ENCODE measurements at regions of chr5 and their contacts with region 1.

Region 1: GRCh38 chr5:69093771-69094482 is at the start of gene SLC30A5:
- DNase-seq: peak; percentile 98
- ATAC-seq: peak; percentile 99
- H3K4me3 ChIP-seq: peak within 1 kb of the TSS; percentile 87
- H3K27ac ChIP-seq: peak within 1 kb of the TSS; percentile 57
- H3K4me1 ChIP-seq: no peaks in the 10 kb centered on the region; the same call in 1 of the 2 replicates
- H3K27me3 ChIP-seq: no peaks in the 10 kb centered on the region
- CTCF ChIP-seq: peak; percentile 88 to 98 (median 97)
- EP300 ChIP-seq: peak in 1 of 2 experiments; percentile 51; a peak in 3 of 4 replicates
- POLR2A ChIP-seq: peak; percentile 98
- RAD21 ChIP-seq: peak; percentile 98
- polyA plus RNA-seq, gene SLC30A5: 14.7 to 27.5 TPM

Region 2: GRCh38 chr5:69042915-69043658 is 50.8 kb before region 1 on chr5:
- CTCF ChIA-PET with region 1: interaction called, 6 read pairs
- POLR2A ChIA-PET with region 1: no interaction called
- RAD21 ChIA-PET with region 1: interaction called, 10 read pairs
- SMC1A ChIA-PET with region 1: interaction called, 8 read pairs
- in situ Hi-C with region 1: no loop called
- intact Hi-C with region 1: loop called (anchors 2 kb)
- DNase-seq: peak; percentile 92
- ATAC-seq: peak; percentile 97
- H3K4me3 ChIP-seq: peak overlapping the region; percentile 60; the same call in 1 of the 2 replicates
- H3K27ac ChIP-seq: peak overlapping the region; percentile 68
- H3K4me1 ChIP-seq: no peaks in the 10 kb centered on the region
- H3K27me3 ChIP-seq: no peaks in the 10 kb centered on the region
- CTCF ChIP-seq: peak; percentile 66 to 90 (median 84)
- EP300 ChIP-seq: no peak
- POLR2A ChIP-seq: no peak
- RAD21 ChIP-seq: peak; percentile 87

Region 3: DNA sequence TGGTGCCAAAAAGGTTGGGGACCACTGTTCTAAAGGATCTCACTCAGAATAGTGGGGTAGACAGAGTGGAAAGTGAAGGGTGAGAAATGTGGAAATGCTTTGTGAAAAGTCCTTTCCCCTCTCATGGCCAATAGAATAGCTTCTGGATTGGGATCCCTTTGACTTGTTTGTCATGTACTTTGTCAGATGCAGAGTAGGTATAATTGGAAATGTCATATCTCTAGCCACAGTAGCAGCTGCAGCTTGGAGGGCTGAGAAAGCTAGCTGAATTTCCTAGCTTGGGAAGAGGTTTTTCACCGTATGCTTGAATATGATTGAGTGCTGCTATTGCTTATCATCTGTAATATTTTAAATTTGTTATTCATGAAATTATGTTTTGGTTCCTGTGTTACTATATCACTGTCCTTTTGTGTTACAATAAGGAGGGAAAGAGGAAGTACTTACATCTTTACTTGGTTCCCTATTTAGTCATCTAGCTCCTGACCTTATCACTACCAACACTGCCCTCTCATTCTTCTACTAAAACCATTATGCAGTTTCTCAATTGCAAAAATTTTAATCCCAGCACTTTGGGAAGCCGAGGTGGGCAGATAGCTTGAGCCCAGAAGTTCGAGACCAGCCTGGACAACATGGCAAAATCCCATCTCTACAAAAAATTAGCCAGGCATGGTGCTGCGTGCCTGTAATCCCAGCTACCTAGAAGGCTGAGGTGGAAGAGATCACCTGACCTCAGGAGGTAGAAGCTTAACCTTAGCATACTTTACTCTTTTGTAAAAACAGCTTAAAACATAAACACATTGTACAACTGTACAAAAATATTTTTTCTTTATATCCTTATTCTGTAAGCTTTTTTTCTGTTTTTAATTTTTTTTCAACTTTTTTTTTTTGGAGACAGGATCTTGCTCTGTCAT is 12.3 kb after region 1 on chr5:
- CTCF ChIA-PET with region 1: interaction called, 7 read pairs
- POLR2A ChIA-PET with region 1: no interaction called
- RAD21 ChIA-PET with region 1: interaction called, 11 read pairs
- SMC1A ChIA-PET with region 1: no interaction called
- in situ Hi-C with region 1: no loop called
- intact Hi-C with region 1: no loop called
- DNase-seq: no peak
- ATAC-seq: peak; percentile 97
- H3K4me3 ChIP-seq: no peak overlapping the region
- H3K27ac ChIP-seq: 0 out of 2 replicates have a peak overlapping the region, but pooled peaks have one; percentile 13
- H3K4me1 ChIP-seq: peaks cover 10% of the 10 kb centered on the region; the same call in 1 of the 2 replicates
- H3K27me3 ChIP-seq: no peaks in the 10 kb centered on the region
- CTCF ChIP-seq: no peak
- EP300 ChIP-seq: 0 out of 4 replicates have a peak, but pooled peaks of 1 of the 2 experiments have one; percentile 37
- POLR2A ChIP-seq: no peak
- RAD21 ChIP-seq: no peak

Region 4: GRCh38 chr5:69189162-69190086 is 95.5 kb after region 1 on chr5 and contains the start of gene CENPH:
- CTCF ChIA-PET with region 1: interaction called, 7 read pairs
- POLR2A ChIA-PET with region 1: no interaction called
- RAD21 ChIA-PET with region 1: interaction called, 8 read pairs
- SMC1A ChIA-PET with region 1: interaction called, 4 read pairs
- in situ Hi-C with region 1: no loop called
- intact Hi-C with region 1: loop called (anchors 5 kb)
- DNase-seq: peak; percentile 63
- ATAC-seq: peak; percentile 95
- H3K4me3 ChIP-seq: peak within 1 kb of the TSS; percentile 93
- H3K27ac ChIP-seq: peak within 1 kb of the TSS; percentile 85
- H3K4me1 ChIP-seq: peaks cover 5% of the 10 kb centered on the region; the same call in 1 of the 2 replicates
- H3K27me3 ChIP-seq: no peaks in the 10 kb centered on the region
- CTCF ChIP-seq: no peak
- EP300 ChIP-seq: no peak
- POLR2A ChIP-seq: peak; percentile 82
- RAD21 ChIP-seq: no peak; the same call in 1 of the 2 replicates
- polyA plus RNA-seq, gene CENPH: 7.3 to 18.0 TPM

Region 5: GRCh38 chr5:69334793-69335268 is 240.9 kb after region 1 on chr5:
- CTCF ChIA-PET with region 1: interaction called, 20 read pairs
- POLR2A ChIA-PET with region 1: interaction called, 6 read pairs
- RAD21 ChIA-PET with region 1: interaction called, 31 read pairs
- SMC1A ChIA-PET with region 1: interaction called, 10 read pairs
- in situ Hi-C with region 1: no loop called
- intact Hi-C with region 1: loop called (anchors 1 kb)
- DNase-seq: no peak
- ATAC-seq: peak; percentile 84
- H3K4me3 ChIP-seq: no peak overlapping the region
- H3K27ac ChIP-seq: no peak overlapping the region
- H3K4me1 ChIP-seq: peaks cover 3% of the 10 kb centered on the region; the same call in 1 of the 2 replicates
- H3K27me3 ChIP-seq: no peaks in the 10 kb centered on the region
- CTCF ChIP-seq: peak; percentile 57 to 86 (median 79)
- EP300 ChIP-seq: no peak
- POLR2A ChIP-seq: no peak
- RAD21 ChIP-seq: peak; percentile 63

Region 6: GRCh38 chr5:69374911-69375446 is 281.1 kb after region 1 on chr5:
- CTCF ChIA-PET with region 1: interaction called, 11 read pairs
- POLR2A ChIA-PET with region 1: interaction called, 7 read pairs
- RAD21 ChIA-PET with region 1: interaction called, 21 read pairs
- SMC1A ChIA-PET with region 1: interaction called, 6 read pairs
- in situ Hi-C with region 1: no loop called
- intact Hi-C with region 1: no loop called
- DNase-seq: peak; percentile 54
- ATAC-seq: peak; percentile 76
- H3K4me3 ChIP-seq: peak overlapping the region; percentile 76
- H3K27ac ChIP-seq: peak overlapping the region; percentile 92
- H3K4me1 ChIP-seq: peaks cover 12% of the 10 kb centered on the region
- H3K27me3 ChIP-seq: no peaks in the 10 kb centered on the region
- CTCF ChIP-seq: no peak
- EP300 ChIP-seq: peak in 1 of 2 experiments; percentile 69; a peak in 2 of 4 replicates
- POLR2A ChIP-seq: 0 out of 2 replicates have a peak, but pooled peaks have one; percentile 31
- RAD21 ChIP-seq: no peak

Measured in GM12878 (cell line).